ENCODE measurements at regions of chr16 and their contacts with region 1.

Region 1: DNA sequence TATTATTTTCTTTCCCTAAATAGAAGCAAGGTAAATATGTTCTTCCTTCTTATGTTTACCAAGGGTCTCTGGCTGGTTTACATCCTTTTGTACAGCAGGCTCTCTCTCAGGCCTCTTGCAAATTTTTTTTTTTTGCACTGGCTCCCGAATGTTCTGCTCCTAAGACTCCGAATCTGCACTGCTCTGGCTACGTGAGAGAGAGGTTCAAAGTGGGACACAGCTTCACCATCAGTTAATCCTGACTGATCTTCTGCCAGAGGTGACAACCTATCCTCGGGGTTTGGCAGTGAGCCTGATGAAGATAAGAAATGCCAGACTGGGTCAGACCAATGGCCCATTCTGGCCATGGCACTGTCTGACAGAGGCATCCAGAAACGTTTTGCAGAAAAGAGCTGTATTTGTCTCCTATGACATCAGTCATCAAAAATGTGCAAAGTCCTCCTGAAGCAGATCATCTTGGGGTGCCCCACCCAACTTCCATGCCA is 136.9 kb downstream of the GRIN2A start:
- DNase-seq: no peak
- ATAC-seq: no peak

Region 2: DNA sequence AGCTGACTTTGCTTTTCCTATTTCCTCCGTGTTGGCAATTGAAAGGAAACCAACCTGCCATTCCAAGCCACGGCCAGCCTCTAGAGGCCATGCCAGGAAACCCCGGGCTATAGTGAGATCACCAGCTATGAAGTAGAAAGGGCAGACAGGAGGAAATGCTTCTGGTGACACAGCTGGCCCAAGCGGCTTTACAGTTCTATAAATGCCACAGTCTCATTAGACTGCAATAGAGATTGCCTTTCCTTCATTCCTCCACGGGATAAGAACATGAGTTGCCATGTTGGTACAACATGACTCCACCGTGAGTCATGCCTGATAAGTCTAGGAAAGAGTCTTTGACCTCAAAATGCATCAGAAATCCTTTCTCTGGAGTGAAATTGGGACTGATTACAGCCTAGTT is 248.0 kb before region 1 on chr16:
- intact Hi-C with region 1: no loop called
- DNase-seq: no peak
- ATAC-seq: no peak

Region 3: DNA sequence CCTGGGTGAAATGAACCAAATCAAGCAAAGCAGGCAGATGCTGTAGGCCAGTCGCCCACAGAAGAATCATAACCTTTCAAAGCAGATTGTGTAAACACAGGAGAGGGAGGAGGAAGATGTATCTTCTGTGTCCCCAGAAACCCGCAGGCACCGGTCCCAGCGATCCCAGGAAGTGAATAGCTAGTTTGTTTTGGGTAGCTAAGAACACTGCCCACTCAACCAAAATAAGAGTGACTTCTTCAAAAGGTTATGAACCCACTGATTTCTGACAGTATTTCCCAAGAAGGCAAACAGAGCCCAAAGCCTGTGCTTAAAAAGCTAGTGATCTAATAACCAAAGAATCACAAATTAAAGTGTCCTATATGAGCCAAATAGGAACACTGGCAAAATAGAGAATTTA is 69.1 kb after region 1 on chr16:
- intact Hi-C with region 1: loop called (anchors 10 kb)
- DNase-seq: no peak
- ATAC-seq: no peak

Region 4: GRCh38 chr16:11757671-11758545 is 1712.6 kb after region 1 on chr16:
- intact Hi-C with region 1: no loop called
- DNase-seq: no peak
- ATAC-seq: peak; percentile 36

Measured in sciatic nerve (tissue), 2 donors.